ENCODE measurements at regions of chr11 and their contacts with region 1.

Region 1: GRCh38 chr11:47407746-47408590 is at the start of gene SLC39A13:
- DNase-seq: peak; percentile 90
- ATAC-seq: peak; percentile 92
- H3K4me3 Mint-ChIP-seq: peak within 1 kb of the TSS; percentile 88
- H3K27ac Mint-ChIP-seq: peak within 1 kb of the TSS; percentile 94
- H3K4me1 Mint-ChIP-seq: peaks cover 21% of the 10 kb centered on the region
- H3K27me3 Mint-ChIP-seq: no peaks in the 10 kb centered on the region
- CTCF ChIP-seq: peak; percentile 79
- total RNA-seq, gene SLC39A13: 10.0 to 10.5 TPM

Region 2: DNA sequence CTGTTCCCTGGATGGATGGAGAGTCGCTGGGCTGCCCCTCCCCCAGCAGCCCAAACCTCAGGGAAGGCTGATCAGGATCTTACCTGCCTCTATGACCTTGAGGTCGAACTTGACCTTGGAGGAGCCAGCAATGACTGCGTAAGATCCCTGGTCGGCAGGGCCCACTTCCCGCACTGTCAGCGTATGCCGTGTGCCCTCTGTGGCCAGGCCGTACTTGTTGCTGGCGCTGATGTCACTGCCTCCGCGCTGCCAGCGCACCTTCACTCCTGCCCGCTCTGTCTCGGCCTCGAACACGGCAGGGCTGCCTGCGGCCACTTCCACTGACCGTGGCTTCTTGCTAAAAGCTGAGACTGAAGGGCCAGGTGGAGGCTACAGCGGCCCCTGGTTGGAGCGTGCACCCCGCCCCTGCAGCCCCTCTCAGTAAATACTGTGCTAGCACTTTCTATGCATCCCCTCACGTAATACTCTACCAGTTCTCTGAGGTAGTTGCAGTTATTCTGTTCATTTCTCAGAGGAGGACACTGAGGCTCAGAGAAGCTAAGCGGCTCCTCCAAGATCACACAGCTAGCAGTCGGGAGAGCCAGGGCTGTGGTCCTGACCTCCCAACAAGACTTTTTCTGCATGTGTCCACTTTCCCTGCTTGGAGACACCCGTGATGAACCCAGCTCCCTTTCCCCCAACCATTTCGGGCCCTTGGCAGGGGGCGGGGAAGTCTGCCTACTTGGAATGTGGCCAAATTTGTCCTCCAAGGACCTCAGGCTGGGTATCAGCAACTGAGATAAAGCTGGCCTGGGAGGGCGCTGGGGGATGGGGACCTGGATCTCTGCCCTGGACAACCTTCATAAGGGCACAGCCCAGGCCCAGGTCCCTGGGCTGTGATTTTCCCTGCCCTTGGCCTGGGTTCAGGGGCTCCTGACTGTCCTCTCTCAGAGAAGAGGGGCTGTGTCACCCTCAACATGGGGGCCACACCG is 56.5 kb before region 1 on chr11:
- CTCF ChIA-PET with region 1: no interaction called
- POLR2A ChIA-PET with region 1: no interaction called
- intact Hi-C with region 1: no loop called
- DNase-seq: no peak
- ATAC-seq: no peak
- H3K4me3 Mint-ChIP-seq: no peak overlapping the region
- H3K27ac Mint-ChIP-seq: no peak overlapping the region
- H3K4me1 Mint-ChIP-seq: no peaks in the 10 kb centered on the region
- H3K27me3 Mint-ChIP-seq: no peaks in the 10 kb centered on the region
- CTCF ChIP-seq: no peak

Region 3: GRCh38 chr11:47394322-47395222 is 13.4 kb before region 1 on chr11:
- CTCF ChIA-PET with region 1: interaction called, 20 read pairs
- POLR2A ChIA-PET with region 1: interaction called, 28 read pairs
- intact Hi-C with region 1: no loop called
- DNase-seq: peak; percentile 73
- ATAC-seq: peak; percentile 87
- H3K4me3 Mint-ChIP-seq: peak overlapping the region; percentile 33
- H3K27ac Mint-ChIP-seq: peak overlapping the region; percentile 91
- H3K4me1 Mint-ChIP-seq: peaks cover 29% of the 10 kb centered on the region
- H3K27me3 Mint-ChIP-seq: no peaks in the 10 kb centered on the region
- CTCF ChIP-seq: no peak

Region 4: DNA sequence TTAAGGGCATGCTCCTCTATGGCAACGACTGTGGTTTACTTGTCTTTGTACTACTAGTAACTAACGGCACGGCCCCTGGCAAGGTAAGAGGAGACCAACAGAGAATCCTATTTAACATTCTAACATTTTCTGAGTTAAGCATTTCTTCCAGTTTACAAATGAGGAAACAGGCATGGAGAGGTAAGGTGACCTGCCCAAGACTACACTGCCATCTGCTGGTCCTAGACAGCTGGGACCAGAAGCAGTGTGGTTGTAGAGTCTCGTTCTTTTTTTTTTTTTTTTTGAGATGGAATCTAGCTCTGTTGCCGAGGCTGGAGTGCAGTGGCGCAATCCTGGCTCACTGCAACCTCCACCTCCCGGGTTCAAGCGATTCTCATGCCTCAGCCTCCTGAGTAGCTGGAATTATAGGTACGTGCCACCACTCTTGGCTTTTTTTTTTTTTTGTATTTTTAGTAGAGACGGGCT is 46.2 kb after region 1 on chr11:
- CTCF ChIA-PET with region 1: interaction called, 11 read pairs
- POLR2A ChIA-PET with region 1: no interaction called
- intact Hi-C with region 1: no loop called
- DNase-seq: peak; percentile 83
- ATAC-seq: peak; percentile 98
- H3K4me3 Mint-ChIP-seq: no peak overlapping the region
- H3K27ac Mint-ChIP-seq: no peak overlapping the region
- H3K4me1 Mint-ChIP-seq: peaks cover 6% of the 10 kb centered on the region
- H3K27me3 Mint-ChIP-seq: no peaks in the 10 kb centered on the region
- CTCF ChIP-seq: peak; percentile 76